Prostate gland (tissue), 2 donors: ENCODE measurements at regions of chr16 and their contacts with region 1.

Region 1: GRCh38 chr16:78122774-78123315 is 23.4 kb downstream of the WWOX start:
- DNase-seq: peak; percentile 75
- H3K4me3 ChIP-seq: no peak overlapping the region
- H3K27ac ChIP-seq: peak overlapping the region; percentile 82 to 86
- H3K4me1 ChIP-seq: no peaks in the 10 kb centered on the region
- H3K27me3 ChIP-seq: no peaks in the 10 kb centered on the region
- CTCF ChIP-seq: peak in 3 of 4 experiments; percentile 64 to 84 (median 81)
- POLR2A ChIP-seq: no peak

Region 2: GRCh38 chr16:78235168-78235800 is 112.4 kb after region 1 on chr16:
- intact Hi-C with region 1: loop called (anchors 5 kb)
- DNase-seq: peak; percentile 68
- H3K4me3 ChIP-seq: no peak overlapping the region
- H3K27ac ChIP-seq: no peak overlapping the region
- H3K4me1 ChIP-seq: peaks cover 4% of the 10 kb centered on the region
- H3K27me3 ChIP-seq: no peaks in the 10 kb centered on the region
- CTCF ChIP-seq: peak; percentile 62 to 90 (median 79)
- POLR2A ChIP-seq: no peak

Region 3: GRCh38 chr16:78390092-78390491 is 267.2 kb after region 1 on chr16:
- intact Hi-C with region 1: no loop called
- DNase-seq: no peak
- H3K4me3 ChIP-seq: no peak overlapping the region
- H3K27ac ChIP-seq: no peak overlapping the region
- H3K4me1 ChIP-seq: no peaks in the 10 kb centered on the region
- H3K27me3 ChIP-seq: no peaks in the 10 kb centered on the region
- CTCF ChIP-seq: no peak
- POLR2A ChIP-seq: no peak

Region 4: GRCh38 chr16:78770353-78771091 is 647.7 kb after region 1 on chr16:
- intact Hi-C with region 1: loop called (anchors 5 kb)
- DNase-seq: peak; percentile 42
- H3K4me3 ChIP-seq: no peak overlapping the region
- H3K27ac ChIP-seq: no peak overlapping the region
- H3K4me1 ChIP-seq: no peaks in the 10 kb centered on the region
- H3K27me3 ChIP-seq: no peaks in the 10 kb centered on the region
- CTCF ChIP-seq: peak; percentile 55 to 90 (median 68)
- POLR2A ChIP-seq: no peak

Region 5: DNA sequence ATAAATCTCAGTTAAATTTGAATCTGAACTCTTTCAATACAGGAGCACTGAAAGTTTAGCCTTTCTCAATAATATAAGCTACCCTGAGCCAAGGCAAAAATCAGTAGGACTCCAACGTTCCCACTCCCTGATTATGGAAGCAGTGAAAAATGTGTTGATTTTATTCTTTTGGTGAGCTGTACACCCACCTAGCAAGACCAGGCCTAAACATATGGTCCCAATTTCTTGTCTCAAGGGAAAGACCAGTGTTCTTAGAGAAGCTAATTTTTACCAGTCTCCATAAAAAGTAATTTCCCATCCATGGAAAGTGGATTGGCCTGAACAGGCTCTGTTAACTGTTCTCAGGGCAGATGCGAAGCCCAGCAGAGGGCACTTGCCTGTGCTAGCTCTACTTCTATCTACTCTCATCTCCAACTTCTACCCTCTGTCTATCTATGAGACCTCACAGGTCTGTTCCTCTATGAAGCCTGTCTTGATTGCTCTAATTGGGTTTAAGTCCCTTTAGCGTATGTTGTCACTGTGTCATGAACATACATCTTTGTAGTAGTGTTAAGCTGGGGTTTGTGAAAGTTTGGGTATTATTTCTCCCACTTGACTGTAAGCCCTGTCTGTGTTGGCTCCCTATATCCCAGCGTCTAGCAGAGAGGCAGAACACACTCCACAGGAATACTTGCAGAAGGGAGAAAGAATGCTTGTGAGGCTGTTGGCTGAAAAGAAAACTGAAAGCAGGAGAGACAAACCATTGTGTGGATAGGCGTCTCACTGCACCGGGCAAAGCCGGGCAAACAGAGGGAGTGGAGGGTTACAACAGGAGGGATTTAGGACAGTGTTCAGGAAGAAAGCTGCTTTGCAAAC is 1644.8 kb after region 1 on chr16:
- intact Hi-C with region 1: loop called (anchors 10 kb)
- DNase-seq: peak; percentile 47
- H3K4me3 ChIP-seq: peak overlapping the region; percentile 23
- H3K27ac ChIP-seq: peak overlapping the region; percentile 85 to 89
- H3K4me1 ChIP-seq: peaks cover 25% of the 10 kb centered on the region
- H3K27me3 ChIP-seq: no peaks in the 10 kb centered on the region
- CTCF ChIP-seq: peak in 1 of 4 experiments; percentile 36
- POLR2A ChIP-seq: peak; percentile 9